HepG2 (cell line): ENCODE measurements at regions of chr2 and their contacts with region 1.

Region 1: DNA sequence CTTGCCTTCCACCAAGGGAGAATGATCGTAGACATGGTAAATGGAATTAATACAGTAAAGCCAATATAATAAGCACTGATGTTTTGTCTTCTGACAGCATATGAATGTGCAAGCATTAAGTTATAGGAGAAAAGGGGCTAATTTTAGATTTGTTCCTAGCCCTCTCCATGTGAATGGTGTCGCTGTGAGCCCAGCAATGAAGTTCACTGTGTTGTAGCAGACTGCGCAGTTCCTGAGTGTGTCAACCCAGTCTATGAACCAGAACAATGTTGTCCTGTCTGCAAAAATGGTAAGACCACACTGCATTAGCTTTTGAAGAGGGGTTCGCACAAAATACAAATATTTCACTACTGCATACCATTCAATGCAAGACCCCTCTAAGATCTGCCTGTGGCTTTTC is 25.6 kb downstream of the VWC2L start:
- DNase-seq: no peak
- ATAC-seq: peak; percentile 70
- H3K4me3 ChIP-seq: no peak overlapping the region
- H3K27ac ChIP-seq: no peak overlapping the region
- H3K4me1 ChIP-seq: no peaks in the 10 kb centered on the region
- H3K27me3 ChIP-seq: no peaks in the 10 kb centered on the region
- CTCF ChIP-seq: no peak
- EP300 ChIP-seq: no peak
- POLR2A ChIP-seq: no peak
- RAD21 ChIP-seq: no peak

Region 2: DNA sequence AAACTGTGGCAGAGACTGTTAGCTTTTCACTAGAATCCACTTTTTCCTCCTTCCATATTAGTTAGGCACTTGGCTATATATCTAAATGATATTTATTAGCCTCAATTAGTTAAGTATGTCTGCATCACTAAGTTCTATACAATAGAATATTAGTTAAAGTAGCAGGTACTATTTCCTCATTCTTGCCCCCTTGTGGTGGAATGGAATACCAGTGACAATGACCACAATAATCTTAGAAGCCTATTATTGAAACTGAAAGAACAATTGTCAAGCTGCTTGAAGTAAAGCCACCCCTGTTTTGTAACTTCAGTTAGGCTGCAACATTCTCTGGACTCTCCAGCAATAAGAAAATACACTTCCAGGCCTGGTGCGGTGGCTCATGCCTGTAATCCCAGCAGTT is 501.9 kb before region 1 on chr2:
- CTCF ChIA-PET with region 1: no interaction called
- POLR2A ChIA-PET with region 1: no interaction called
- in situ Hi-C with region 1: no loop called
- intact Hi-C with region 1: no loop called
- DNase-seq: peak; percentile 44
- ATAC-seq: peak; percentile 87
- H3K4me3 ChIP-seq: peak overlapping the region in 1 of 3 experiments; percentile 11; a peak in 2 of 6 replicates
- H3K27ac ChIP-seq: no peak overlapping the region
- H3K4me1 ChIP-seq: no peaks in the 10 kb centered on the region
- H3K27me3 ChIP-seq: no peaks in the 10 kb centered on the region; a peak in 1 of 5 replicates
- CTCF ChIP-seq: peak; percentile 60
- EP300 ChIP-seq: no peak
- POLR2A ChIP-seq: no peak
- RAD21 ChIP-seq: no peak

Region 3: DNA sequence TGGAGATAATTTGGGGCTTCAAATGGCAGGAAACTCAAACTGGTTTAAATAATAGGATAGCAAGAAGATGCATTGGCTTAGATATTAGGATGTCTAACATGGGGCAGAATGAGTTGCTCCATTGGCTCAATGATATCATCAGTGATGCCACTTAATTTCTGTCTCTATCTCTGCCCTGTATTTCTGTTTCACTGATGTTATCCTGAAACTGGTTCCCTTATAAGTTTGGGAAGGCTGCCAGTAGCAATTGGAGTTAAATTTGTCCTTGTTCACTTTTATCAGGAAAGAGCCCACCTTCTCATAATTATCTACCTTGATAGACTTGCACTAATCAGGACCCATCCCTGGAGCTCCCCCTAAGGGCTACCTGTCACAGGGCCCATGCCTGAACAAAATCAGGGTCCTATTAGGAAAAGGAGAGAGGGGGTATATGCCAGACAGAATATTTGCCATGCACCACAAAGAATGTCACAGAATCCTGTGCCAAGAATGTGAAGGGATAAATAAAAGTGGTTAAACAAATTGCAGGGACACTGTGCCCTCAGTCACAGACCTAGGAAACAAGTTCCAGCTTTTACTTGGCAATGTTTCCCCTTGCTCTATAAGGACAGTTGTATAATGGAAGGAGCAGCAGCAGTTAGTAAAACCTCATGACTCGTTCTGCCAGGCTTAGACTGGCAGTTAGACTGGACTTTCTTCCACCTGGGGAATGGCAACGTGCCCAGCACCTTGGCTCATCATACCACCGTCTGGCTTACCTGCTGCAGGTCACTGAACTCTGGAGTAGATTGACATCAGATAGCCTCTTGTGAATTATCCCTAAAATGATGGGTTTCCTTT is 58.0 kb before region 1 on chr2:
- CTCF ChIA-PET with region 1: no interaction called
- POLR2A ChIA-PET with region 1: no interaction called
- in situ Hi-C with region 1: no loop called
- intact Hi-C with region 1: no loop called
- DNase-seq: no peak
- ATAC-seq: no peak
- H3K4me3 ChIP-seq: no peak overlapping the region
- H3K27ac ChIP-seq: no peak overlapping the region
- H3K4me1 ChIP-seq: no peaks in the 10 kb centered on the region
- H3K27me3 ChIP-seq: no peaks in the 10 kb centered on the region
- CTCF ChIP-seq: no peak
- EP300 ChIP-seq: no peak
- POLR2A ChIP-seq: no peak
- RAD21 ChIP-seq: no peak

Region 4: GRCh38 chr2:214465361-214466146 is 29.1 kb after region 1 on chr2:
- CTCF ChIA-PET with region 1: no interaction called
- POLR2A ChIA-PET with region 1: no interaction called
- in situ Hi-C with region 1: no loop called
- intact Hi-C with region 1: loop called (anchors 1 kb)
- DNase-seq: peak; percentile 13
- ATAC-seq: peak; percentile 60; the same call in 2 of the 3 replicates
- H3K4me3 ChIP-seq: no peak overlapping the region
- H3K27ac ChIP-seq: no peak overlapping the region
- H3K4me1 ChIP-seq: no peaks in the 10 kb centered on the region
- H3K27me3 ChIP-seq: no peaks in the 10 kb centered on the region
- CTCF ChIP-seq: no peak
- EP300 ChIP-seq: no peak
- POLR2A ChIP-seq: no peak
- RAD21 ChIP-seq: no peak